AG04450 (cell line): ENCODE measurements at regions of chr3 and their contacts with region 1.

Region 1: GRCh38 chr3:47420511-47421484 is 40.0 kb downstream of the PTPN23 start:
- DNase-seq: peak; percentile 61
- H3K4me3 ChIP-seq: no peak overlapping the region
- H3K27ac ChIP-seq: no peak overlapping the region
- H3K27me3 ChIP-seq: no peaks in the 10 kb centered on the region
- CTCF ChIP-seq: peak; percentile 95

Region 2: DNA sequence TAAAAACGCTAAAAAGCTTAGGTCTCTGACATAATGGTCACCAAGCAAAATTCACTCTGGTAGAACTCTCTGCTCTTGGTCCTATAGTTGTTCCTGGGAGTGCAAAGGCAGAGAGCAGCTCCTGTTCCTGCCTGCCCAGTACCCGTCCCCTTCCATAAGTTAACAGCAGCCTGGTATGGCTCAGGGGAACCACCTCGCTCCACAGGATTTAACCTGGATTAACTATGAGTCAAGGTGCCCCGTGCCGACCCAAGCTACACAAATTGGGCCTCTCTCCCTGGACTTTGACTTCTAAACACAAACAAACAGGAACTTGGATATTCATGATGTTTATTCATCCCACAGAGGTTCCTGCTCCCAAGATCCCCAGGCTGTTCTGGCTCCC is 22.8 kb after region 1 on chr3:
- CTCF ChIA-PET with region 1: interaction called, 13 read pairs
- POLR2A ChIA-PET with region 1: interaction called, 4 read pairs
- DNase-seq: no peak
- H3K4me3 ChIP-seq: no peak overlapping the region
- H3K27ac ChIP-seq: peak overlapping the region; percentile 75
- H3K27me3 ChIP-seq: no peaks in the 10 kb centered on the region
- CTCF ChIP-seq: no peak

Region 3: GRCh38 chr3:47475570-47476329 is 55.0 kb after region 1 on chr3 and contains the start of gene SCAP:
- CTCF ChIA-PET with region 1: interaction called, 31 read pairs
- POLR2A ChIA-PET with region 1: interaction called, 5 read pairs
- DNase-seq: peak; percentile 44
- H3K4me3 ChIP-seq: peak within 1 kb of the TSS; percentile 87
- H3K27ac ChIP-seq: peak within 1 kb of the TSS; percentile 61
- H3K27me3 ChIP-seq: no peaks in the 10 kb centered on the region
- CTCF ChIP-seq: peak; percentile 79
- polyA plus RNA-seq, gene SCAP: 17.0 and 22.9 TPM in 2 replicates

Region 4: GRCh38 chr3:47482366-47482765 is 61.6 kb after region 1 on chr3:
- CTCF ChIA-PET with region 1: interaction called, 13 read pairs
- POLR2A ChIA-PET with region 1: no interaction called
- DNase-seq: no peak
- H3K4me3 ChIP-seq: no peak overlapping the region
- H3K27ac ChIP-seq: no peak overlapping the region
- H3K27me3 ChIP-seq: no peaks in the 10 kb centered on the region
- CTCF ChIP-seq: no peak

Region 5: DNA sequence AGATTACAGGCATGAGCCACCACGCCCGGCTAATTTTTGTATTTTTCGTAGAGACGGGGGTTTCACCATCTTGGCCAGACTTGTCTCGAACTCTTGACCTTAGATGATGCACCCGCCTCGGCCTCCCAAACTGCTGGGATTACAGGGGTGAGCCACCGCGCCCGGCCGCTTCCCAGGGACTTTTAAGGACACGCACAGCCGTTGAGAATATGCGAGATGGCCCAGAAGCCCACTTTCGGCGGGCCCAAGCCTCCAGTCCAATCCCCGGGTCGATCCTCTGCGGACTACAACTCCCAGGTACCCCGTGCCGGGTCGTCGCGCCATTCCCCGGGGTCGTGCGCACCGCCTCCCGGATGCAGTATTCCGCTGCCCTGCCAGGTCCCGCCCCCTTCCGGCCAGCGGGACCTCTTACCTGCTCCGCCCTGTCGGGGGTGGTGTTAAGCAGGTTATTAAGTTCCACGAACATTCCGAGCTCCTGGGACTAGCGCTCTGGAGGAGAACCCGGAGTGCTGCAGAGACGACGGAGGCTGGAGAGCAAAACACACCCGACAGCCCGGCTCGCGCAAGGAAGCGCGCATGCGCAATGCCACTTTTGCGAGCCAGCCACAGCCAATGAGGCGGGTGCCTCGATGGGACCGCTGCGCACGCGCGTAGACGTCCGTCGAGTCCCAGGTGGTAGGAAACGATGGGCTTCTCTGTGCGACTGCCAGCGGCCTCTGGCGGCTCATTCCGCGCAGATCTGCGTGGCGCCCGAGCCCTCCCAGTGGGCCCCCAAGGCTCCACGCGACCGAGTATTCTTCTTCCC is 92.5 kb after region 1 on chr3 and contains the start of gene ELP6:
- CTCF ChIA-PET with region 1: interaction called, 21 read pairs
- POLR2A ChIA-PET with region 1: no interaction called
- DNase-seq: peak; percentile 91
- H3K4me3 ChIP-seq: peak within 1 kb of the TSS; percentile 70
- H3K27ac ChIP-seq: peak within 1 kb of the TSS; percentile 85
- H3K27me3 ChIP-seq: no peaks in the 10 kb centered on the region
- CTCF ChIP-seq: peak; percentile 50
- polyA plus RNA-seq, gene ELP6: 40.0 and 46.6 TPM in 2 replicates

Region 6: GRCh38 chr3:47612178-47612577 is 191.4 kb after region 1 on chr3:
- CTCF ChIA-PET with region 1: no interaction called
- POLR2A ChIA-PET with region 1: no interaction called
- DNase-seq: peak; percentile 15
- H3K4me3 ChIP-seq: no peak overlapping the region
- H3K27ac ChIP-seq: no peak overlapping the region
- H3K27me3 ChIP-seq: no peaks in the 10 kb centered on the region
- CTCF ChIP-seq: no peak